CD8-positive, alpha-beta T cell (primary cell): ENCODE measurements at regions of chr2 and their contacts with region 1.

Region 1: GRCh38 chr2:25276569-25277465 is 64.9 kb downstream of the DNMT3A start:
- DNase-seq: peak; percentile 47 to 87 (median 74)
- ATAC-seq: peak; percentile 35
- H3K4me3 ChIP-seq: peak overlapping the region; percentile 55 to 57
- H3K4me3 Mint-ChIP-seq: peak overlapping the region; percentile 76
- H3K27ac ChIP-seq: peak overlapping the region; percentile 76 to 95
- H3K27ac Mint-ChIP-seq: peak overlapping the region; percentile 99
- H3K4me1 ChIP-seq: peaks cover 85% of the 10 kb centered on the region
- H3K4me1 Mint-ChIP-seq: peaks cover 81% of the 10 kb centered on the region
- H3K27me3 ChIP-seq: no peaks in the 10 kb centered on the region
- H3K27me3 Mint-ChIP-seq: no peaks in the 10 kb centered on the region
- CTCF ChIP-seq: peak; percentile 91

Region 2: DNA sequence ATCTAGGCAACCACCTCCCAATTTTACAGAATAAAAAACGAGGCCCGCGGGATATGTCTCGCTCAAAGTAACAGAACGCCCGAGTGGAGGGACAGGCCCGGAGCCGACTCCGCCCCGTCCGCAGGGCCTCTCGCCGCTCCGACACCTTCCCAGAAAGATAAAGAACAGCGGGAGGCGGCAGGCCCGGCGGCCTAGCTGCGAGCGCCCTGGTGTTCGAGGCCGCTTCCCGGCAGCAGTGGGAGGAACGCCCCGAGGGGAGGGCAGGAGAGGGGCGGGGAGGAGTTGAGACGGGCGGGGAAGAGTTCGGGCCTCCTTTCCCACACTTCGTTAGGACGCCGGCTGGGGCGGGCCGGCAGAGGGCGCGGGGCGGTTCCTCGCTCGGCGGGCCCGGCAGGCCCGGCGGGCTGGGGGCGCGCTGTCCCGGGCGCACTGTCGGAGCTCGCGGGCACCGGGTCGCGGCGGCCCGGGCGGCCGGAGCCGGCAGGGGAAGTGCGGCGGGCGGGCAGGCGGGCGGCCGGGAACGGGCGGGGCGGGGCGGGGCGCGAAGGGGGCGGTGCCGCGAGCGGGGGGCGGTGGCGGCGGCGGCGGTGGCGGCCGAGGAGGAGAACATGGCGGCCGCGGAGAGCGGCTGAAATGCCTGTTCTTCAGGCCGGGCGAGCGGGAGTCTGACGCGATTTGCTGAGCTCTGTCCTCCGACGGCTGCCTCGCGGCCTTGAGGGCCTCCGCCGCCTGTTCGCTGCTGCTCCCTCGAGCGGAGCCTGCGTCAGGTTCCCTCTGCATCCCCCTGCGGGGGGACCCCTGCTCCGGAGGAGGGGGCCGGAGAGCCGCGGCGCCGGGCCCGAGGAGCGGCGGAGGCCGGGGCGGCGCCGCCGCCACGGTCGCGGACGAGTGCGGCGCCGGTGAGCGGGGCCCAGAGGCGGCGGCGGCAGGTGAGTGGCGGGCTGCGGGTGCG is 785.9 kb before region 1 on chr2 and contains the start of gene NCOA1:
- CTCF ChIA-PET with region 1: no interaction called
- POLR2A ChIA-PET with region 1: no interaction called
- intact Hi-C with region 1: loop called in 1 of 2 experiments (anchors 10 kb)
- DNase-seq: peak; percentile 77 to 94 (median 89)
- ATAC-seq: peak; percentile 85
- H3K4me3 ChIP-seq: peak within 1 kb of the TSS; percentile 63 to 72
- H3K4me3 Mint-ChIP-seq: peak within 1 kb of the TSS; percentile 89
- H3K27ac ChIP-seq: peak within 1 kb of the TSS; percentile 70 to 93
- H3K27ac Mint-ChIP-seq: peak within 1 kb of the TSS; percentile 94
- H3K4me1 ChIP-seq: peaks cover 37% of the 10 kb centered on the region
- H3K4me1 Mint-ChIP-seq: peaks cover 53% of the 10 kb centered on the region
- H3K27me3 ChIP-seq: no peaks in the 10 kb centered on the region
- H3K27me3 Mint-ChIP-seq: no peaks in the 10 kb centered on the region
- CTCF ChIP-seq: no peak
- total RNA-seq, gene NCOA1: 32.6 to 33.5 TPM

Region 3: DNA sequence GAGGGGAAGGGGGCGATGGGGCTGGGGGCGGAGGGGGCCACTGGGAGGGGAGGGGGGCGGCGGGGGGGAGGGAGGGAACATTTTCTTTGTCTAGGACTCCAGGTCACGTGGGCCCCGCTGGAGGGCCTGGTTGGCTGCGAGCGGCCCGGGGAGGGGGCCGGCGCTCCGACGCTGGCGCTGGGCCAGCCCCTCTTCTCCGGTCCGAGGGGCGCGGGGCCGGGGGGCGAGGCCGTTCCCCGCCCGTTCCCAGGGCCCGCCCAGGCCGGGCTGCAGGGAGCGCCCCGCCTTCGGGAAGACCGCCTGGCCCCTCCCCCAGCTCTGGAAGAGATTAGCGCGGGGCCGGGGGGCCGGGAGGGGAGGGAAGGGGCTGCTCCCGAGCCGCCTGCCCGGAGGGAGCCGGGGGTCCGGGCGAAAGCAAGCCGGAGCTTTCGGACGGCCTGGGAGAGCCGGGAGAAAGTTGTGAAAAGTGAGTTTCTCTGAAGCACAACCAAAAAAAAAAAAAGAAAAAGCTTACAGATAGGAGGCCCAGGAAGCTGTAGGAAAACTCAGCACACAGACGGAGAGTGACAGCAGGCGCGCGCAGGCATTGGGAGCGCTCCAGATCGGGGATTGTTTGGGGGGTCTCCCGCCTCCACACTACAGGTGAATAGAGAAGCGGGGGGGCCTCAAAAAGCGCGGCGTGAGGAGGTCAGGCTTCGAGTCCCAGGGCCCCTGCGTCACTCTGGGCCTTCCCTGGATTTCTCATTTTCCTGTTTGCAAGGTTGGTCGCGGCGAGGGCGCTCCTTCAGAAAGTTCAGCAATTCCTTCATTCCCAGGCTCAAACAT is 24.3 kb before region 1 on chr2:
- CTCF ChIA-PET with region 1: interaction called, 8 read pairs
- POLR2A ChIA-PET with region 1: interaction called, 35 read pairs
- intact Hi-C with region 1: loop called (anchors 1 kb)
- DNase-seq: peak in 8 of 9 experiments; percentile 39 to 76 (median 65)
- ATAC-seq: peak; percentile 52
- H3K4me3 ChIP-seq: peak overlapping the region; percentile 43 to 59
- H3K4me3 Mint-ChIP-seq: peak overlapping the region; percentile 82
- H3K27ac ChIP-seq: peak overlapping the region in 1 of 2 experiments; percentile 31
- H3K27ac Mint-ChIP-seq: peak overlapping the region; percentile 89
- H3K4me1 ChIP-seq: peaks cover 30% of the 10 kb centered on the region
- H3K4me1 Mint-ChIP-seq: peaks cover 35% of the 10 kb centered on the region
- H3K27me3 ChIP-seq: no peaks in the 10 kb centered on the region
- H3K27me3 Mint-ChIP-seq: no peaks in the 10 kb centered on the region
- CTCF ChIP-seq: no peak

Region 4: DNA sequence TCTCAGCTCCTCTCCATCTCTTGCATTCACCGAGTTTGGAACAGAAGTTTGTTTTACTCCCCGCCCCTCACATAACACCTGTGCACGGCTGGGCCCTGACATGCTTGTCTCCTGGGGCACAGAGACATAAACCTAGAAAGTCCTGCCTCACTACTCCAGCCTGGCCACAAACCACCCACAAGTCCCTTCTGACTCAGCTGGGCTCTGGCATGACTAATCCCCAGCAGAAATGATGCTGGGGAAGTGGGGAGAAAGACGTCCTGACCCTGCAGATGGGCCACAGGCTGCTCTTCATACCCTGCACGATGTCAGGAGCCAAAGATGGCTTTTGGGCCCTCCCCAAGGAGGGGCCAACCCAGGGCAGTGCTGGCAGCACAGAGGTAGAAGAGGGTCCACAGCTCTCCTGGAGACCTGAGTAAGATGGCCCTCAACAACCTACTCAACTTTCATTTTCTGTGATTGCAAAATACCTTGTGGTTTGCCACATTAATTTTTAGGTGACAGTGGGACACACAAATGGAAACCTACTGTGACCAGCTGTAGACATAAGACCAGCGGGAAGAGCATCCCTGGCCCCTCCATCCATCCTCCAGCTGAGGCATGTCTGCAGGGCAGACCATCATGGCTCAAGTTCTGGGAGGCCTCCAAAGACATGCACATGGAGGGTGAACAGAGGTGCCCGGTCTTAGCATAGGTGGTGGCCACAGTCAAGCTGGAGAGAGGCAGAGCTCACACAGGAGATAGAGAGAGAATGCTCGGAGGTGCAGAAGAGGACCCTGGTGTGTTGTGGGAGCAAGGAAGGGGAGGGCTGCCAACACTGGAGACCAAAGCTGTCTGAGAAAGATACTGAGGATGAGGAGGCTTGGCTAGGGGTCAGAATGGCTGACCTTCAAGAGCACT is 24.9 kb after region 1 on chr2:
- CTCF ChIA-PET with region 1: interaction called, 5 read pairs
- POLR2A ChIA-PET with region 1: interaction called, 10 read pairs
- intact Hi-C with region 1: no loop called
- DNase-seq: peak in 8 of 9 experiments; percentile 41 to 74 (median 66)
- ATAC-seq: peak; percentile 68
- H3K4me3 ChIP-seq: no peak overlapping the region
- H3K4me3 Mint-ChIP-seq: no peak overlapping the region
- H3K27ac ChIP-seq: peak overlapping the region in 1 of 2 experiments; percentile 33
- H3K27ac Mint-ChIP-seq: peak overlapping the region; percentile 88
- H3K4me1 ChIP-seq: peaks cover 46% of the 10 kb centered on the region
- H3K4me1 Mint-ChIP-seq: peaks cover 56% of the 10 kb centered on the region
- H3K27me3 ChIP-seq: no peaks in the 10 kb centered on the region
- H3K27me3 Mint-ChIP-seq: no peaks in the 10 kb centered on the region
- CTCF ChIP-seq: no peak

Region 5: GRCh38 chr2:25314514-25315315 is 37.9 kb after region 1 on chr2:
- CTCF ChIA-PET with region 1: interaction called, 29 read pairs
- POLR2A ChIA-PET with region 1: interaction called, 9 read pairs
- intact Hi-C with region 1: loop called in 1 of 2 experiments (anchors 5 kb)
- DNase-seq: peak; percentile 21 to 80 (median 69)
- ATAC-seq: peak; percentile 86
- H3K4me3 ChIP-seq: peak overlapping the region; percentile 34 to 46
- H3K4me3 Mint-ChIP-seq: peak overlapping the region; percentile 81
- H3K27ac ChIP-seq: peak overlapping the region; percentile 32 to 76
- H3K27ac Mint-ChIP-seq: peak overlapping the region; percentile 95
- H3K4me1 ChIP-seq: peaks cover 71% of the 10 kb centered on the region
- H3K4me1 Mint-ChIP-seq: peaks cover 66% of the 10 kb centered on the region
- H3K27me3 ChIP-seq: no peaks in the 10 kb centered on the region
- H3K27me3 Mint-ChIP-seq: no peaks in the 10 kb centered on the region
- CTCF ChIP-seq: no peak

Region 6: DNA sequence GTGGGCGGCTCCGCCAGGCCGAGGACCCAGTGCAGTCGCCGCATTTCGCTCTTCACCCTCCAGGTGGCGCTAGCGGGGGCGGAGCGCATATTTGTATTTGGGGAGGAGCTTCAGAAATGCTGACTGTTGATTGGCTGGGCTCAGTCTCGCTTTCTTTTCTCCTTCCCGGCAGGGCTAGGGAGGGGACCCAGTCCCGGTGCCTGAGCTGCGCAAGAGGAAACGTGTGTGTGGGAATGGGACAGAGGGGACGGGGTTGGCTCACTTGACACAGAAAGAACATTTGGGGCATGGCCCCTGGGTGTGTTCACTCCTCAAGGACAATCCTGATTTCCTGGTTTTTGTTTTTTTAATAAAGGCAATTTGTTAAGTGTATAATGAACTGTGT is 85.2 kb after region 1 on chr2:
- CTCF ChIA-PET with region 1: interaction called, 7 read pairs
- POLR2A ChIA-PET with region 1: interaction called, 15 read pairs
- intact Hi-C with region 1: loop called in 1 of 2 experiments (anchors 5 kb)
- DNase-seq: peak; percentile 87 to 99 (median 94)
- ATAC-seq: peak; percentile 94
- H3K4me3 ChIP-seq: peak overlapping the region; percentile 65 to 73
- H3K4me3 Mint-ChIP-seq: peak overlapping the region; percentile 89
- H3K27ac ChIP-seq: peak overlapping the region; percentile 49 to 84
- H3K27ac Mint-ChIP-seq: peak overlapping the region; percentile 94
- H3K4me1 ChIP-seq: peaks cover 15% of the 10 kb centered on the region
- H3K4me1 Mint-ChIP-seq: peaks cover 20% of the 10 kb centered on the region
- H3K27me3 ChIP-seq: no peaks in the 10 kb centered on the region
- H3K27me3 Mint-ChIP-seq: no peaks in the 10 kb centered on the region
- CTCF ChIP-seq: peak; percentile 94